Esophagus squamous epithelium (tissue), 5 donors: ENCODE measurements at regions of chr1 and their contacts with region 1.

Region 1: GRCh38 chr1:153749408-153750005 is 21.7 kb downstream of the INTS3 start:
- DNase-seq: peak; percentile 27
- H3K4me3 ChIP-seq: no peak overlapping the region
- H3K27ac ChIP-seq: peak overlapping the region in 3 of 4 donors; percentile 17 to 64 (median 50)
- H3K4me1 ChIP-seq: peaks cover 0 to 36% (median 3%) of the 10 kb centered on the region in 3 donors
- H3K27me3 ChIP-seq: no peaks in the 10 kb centered on the region
- CTCF ChIP-seq: peak; percentile 63 to 96 (median 91)
- POLR2A ChIP-seq: no peak

Region 2: DNA sequence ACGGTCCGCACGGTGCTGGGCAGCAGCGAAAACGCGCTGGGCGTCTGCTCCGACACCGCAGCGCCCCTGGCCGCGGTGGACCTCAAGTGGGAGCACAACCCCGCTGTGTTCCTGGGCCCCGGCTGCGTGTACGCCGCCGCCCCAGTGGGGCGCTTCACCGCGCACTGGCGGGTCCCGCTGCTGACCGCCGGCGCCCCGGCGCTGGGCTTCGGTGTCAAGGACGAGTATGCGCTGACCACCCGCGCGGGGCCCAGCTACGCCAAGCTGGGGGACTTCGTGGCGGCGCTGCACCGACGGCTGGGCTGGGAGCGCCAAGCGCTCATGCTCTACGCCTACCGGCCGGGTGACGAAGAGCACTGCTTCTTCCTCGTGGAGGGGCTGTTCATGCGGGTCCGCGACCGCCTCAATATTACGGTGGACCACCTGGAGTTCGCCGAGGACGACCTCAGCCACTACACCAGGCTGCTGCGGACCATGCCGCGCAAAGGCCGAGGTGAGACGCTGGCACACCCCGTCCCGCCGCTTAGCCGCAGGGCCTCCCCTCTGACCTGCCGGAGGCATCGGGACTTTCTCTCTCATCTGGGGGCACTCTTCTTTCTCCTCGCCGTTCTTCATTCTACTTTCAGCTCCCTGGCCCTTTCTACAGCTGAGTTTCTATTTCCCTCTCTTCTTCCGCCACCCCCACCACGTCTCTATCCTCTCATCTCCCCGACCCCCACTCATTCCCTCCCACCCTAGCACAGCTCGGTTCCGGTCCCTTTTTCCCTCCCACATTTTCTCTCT is 70.0 kb before region 1 on chr1:
- intact Hi-C with region 1: loop called (anchors 5 kb)
- DNase-seq: no peak
- H3K4me3 ChIP-seq: peak overlapping the region; percentile 37 to 70 (median 48)
- H3K27ac ChIP-seq: peak overlapping the region; percentile 34 to 82 (median 64)
- H3K4me1 ChIP-seq: peaks cover 19 to 34% (median 22%) of the 10 kb centered on the region in 3 donors
- H3K27me3 ChIP-seq: peaks cover 3 to 44% (median 7%) of the 10 kb centered on the region in 4 donors
- CTCF ChIP-seq: peak in 3 of 6 experiments; percentile 18 to 34 (median 20)
- POLR2A ChIP-seq: no peak